Ascending aorta (tissue), 2 donors: ENCODE measurements at regions of chr2 and their contacts with region 1.

Region 1: DNA sequence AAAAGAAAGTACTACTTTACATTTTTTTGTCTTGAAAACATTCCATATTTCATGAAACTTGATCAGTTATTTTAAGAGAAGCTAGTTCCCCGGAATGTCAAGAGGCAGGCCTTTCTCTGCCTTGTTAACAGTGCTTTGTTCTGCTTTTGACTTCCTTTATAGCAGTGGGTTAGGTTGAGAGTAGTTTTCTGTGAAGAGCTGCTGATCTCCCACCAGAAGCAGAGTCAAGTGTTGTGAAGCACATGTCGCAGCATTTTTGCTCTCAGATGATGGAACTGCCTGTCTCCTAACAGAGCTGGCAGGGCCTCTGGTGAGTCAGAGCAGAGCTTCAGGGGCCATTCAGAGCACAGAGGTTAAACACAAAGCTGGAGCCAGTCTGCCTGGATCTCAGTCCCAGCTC is 871.8 kb downstream of the SLC4A3 start:
- DNase-seq: peak in 1 of 2 donors; percentile 62
- H3K4me3 ChIP-seq: no peak overlapping the region
- H3K27ac ChIP-seq: no peak overlapping the region
- H3K4me1 ChIP-seq: no peaks in the 10 kb centered on the region
- H3K27me3 ChIP-seq: no peaks in the 10 kb centered on the region
- CTCF ChIP-seq: no peak

Region 2: GRCh38 chr2:220552790-220553535 is 53.7 kb after region 1 on chr2:
- intact Hi-C with region 1: loop called (anchors 2 kb)
- DNase-seq: no peak
- H3K4me3 ChIP-seq: no peak overlapping the region
- H3K27ac ChIP-seq: no peak overlapping the region
- H3K4me1 ChIP-seq: no peaks in the 10 kb centered on the region
- H3K27me3 ChIP-seq: no peaks in the 10 kb centered on the region
- CTCF ChIP-seq: no peak